ENCODE measurements at regions of chr10 and their contacts with region 1.

Region 1: DNA sequence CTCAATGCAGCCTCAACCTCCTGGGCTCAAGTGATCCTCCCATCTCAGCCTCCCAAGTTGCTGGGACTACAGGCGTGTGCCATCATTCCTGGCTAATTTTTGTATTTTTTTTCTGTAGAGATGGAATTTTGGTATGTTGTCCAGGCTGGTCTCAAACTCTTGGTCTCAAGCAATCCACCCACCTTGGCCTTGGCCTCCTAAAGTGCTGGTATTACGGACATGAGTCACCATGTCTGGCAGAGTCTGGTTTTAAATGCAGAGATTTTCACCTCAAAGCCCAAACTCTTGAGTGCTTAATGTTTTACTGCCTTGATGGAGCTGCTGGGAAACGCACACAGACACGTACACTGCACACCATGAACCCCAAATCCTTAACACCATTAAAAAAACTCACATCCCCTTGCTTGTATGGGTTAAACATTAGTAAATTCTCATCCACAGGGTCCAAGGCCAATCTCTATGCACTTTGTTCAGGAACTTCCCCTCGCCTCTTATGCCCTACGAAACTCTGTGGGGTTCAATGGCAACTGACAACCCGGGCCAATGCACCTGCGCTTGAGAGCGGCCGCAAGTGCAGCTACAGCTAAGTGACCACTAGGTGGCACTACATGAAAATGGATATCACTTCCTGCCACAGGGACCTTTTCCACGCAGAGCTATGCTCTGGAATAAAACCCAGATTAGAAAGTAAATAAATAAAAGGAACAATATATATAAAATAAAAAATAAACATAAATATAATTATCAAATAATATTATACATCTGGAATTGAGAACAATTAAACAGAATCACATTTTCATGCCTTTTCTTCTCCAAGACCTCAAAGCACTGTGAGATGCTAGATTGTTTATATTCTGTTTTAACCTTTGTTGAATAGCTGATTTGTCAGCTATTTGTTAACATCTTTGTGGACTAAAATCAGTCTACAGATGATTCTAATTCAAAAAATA is 66.9 kb upstream of the AFAP1L2 start:
- DNase-seq: peak; percentile 43 to 87 (median 67)
- ATAC-seq: peak; percentile 73
- H3K4me3 ChIP-seq: no peak overlapping the region
- H3K4me3 Mint-ChIP-seq: no peak overlapping the region
- H3K27ac ChIP-seq: no peak overlapping the region
- H3K27ac Mint-ChIP-seq: peak overlapping the region; percentile 89
- H3K4me1 ChIP-seq: peaks cover 11% of the 10 kb centered on the region
- H3K4me1 Mint-ChIP-seq: peaks cover 39% of the 10 kb centered on the region
- H3K27me3 ChIP-seq: no peaks in the 10 kb centered on the region
- H3K27me3 Mint-ChIP-seq: no peaks in the 10 kb centered on the region
- CTCF ChIP-seq: peak; percentile 83

Region 2: GRCh38 chr10:112875476-112876267 is 1595.6 kb before region 1 on chr10:
- CTCF ChIA-PET with region 1: no interaction called
- POLR2A ChIA-PET with region 1: no interaction called
- intact Hi-C with region 1: no loop called
- DNase-seq: peak in 1 of 9 experiments; percentile 12
- ATAC-seq: no peak
- H3K4me3 ChIP-seq: no peak overlapping the region
- H3K4me3 Mint-ChIP-seq: no peak overlapping the region
- H3K27ac ChIP-seq: no peak overlapping the region
- H3K27ac Mint-ChIP-seq: no peak overlapping the region
- H3K4me1 ChIP-seq: no peaks in the 10 kb centered on the region
- H3K4me1 Mint-ChIP-seq: no peaks in the 10 kb centered on the region
- H3K27me3 ChIP-seq: no peaks in the 10 kb centered on the region
- H3K27me3 Mint-ChIP-seq: peaks cover 1% of the 10 kb centered on the region
- CTCF ChIP-seq: no peak

Region 3: GRCh38 chr10:114304017-114304570 is 167.1 kb before region 1 on chr10:
- CTCF ChIA-PET with region 1: interaction called, 7 read pairs
- POLR2A ChIA-PET with region 1: no interaction called
- intact Hi-C with region 1: loop called in 1 of 2 experiments (anchors 2 kb)
- DNase-seq: peak; percentile 31 to 80 (median 67)
- ATAC-seq: peak; percentile 36
- H3K4me3 ChIP-seq: peak overlapping the region; percentile 59 to 69
- H3K4me3 Mint-ChIP-seq: peak overlapping the region; percentile 89
- H3K27ac ChIP-seq: peak overlapping the region; percentile 7 to 37
- H3K27ac Mint-ChIP-seq: peak overlapping the region; percentile 70
- H3K4me1 ChIP-seq: peaks cover 4% of the 10 kb centered on the region
- H3K4me1 Mint-ChIP-seq: peaks cover 10% of the 10 kb centered on the region
- H3K27me3 ChIP-seq: no peaks in the 10 kb centered on the region
- H3K27me3 Mint-ChIP-seq: no peaks in the 10 kb centered on the region
- CTCF ChIP-seq: peak; percentile 50

Region 4: DNA sequence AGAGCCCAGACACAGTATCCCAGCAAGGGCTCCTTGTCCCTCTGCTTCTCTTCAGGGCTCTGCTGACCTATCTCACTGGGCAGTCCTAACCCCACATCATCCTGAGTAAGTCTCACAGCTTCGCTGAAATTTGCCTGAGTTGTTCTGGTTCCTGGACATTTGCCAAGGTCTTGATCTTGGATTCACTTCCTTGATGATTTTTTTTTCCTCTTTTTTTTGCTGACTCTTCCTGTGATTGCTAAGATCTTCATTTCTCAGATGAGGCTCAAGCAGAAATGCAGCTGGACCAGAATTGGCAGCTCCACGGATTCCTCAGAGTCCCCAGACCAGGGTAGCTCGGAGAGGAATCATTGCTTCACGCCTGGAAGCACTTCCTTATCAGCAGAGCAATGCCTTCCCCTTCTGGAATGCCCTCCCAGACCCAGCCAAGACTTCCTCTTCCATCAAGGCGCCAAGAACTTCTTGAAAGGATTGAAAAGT is 58.3 kb before region 1 on chr10:
- CTCF ChIA-PET with region 1: no interaction called
- POLR2A ChIA-PET with region 1: no interaction called
- intact Hi-C with region 1: no loop called
- DNase-seq: no peak
- ATAC-seq: no peak
- H3K4me3 ChIP-seq: no peak overlapping the region
- H3K4me3 Mint-ChIP-seq: no peak overlapping the region
- H3K27ac ChIP-seq: no peak overlapping the region
- H3K27ac Mint-ChIP-seq: no peak overlapping the region
- H3K4me1 ChIP-seq: no peaks in the 10 kb centered on the region
- H3K4me1 Mint-ChIP-seq: no peaks in the 10 kb centered on the region
- H3K27me3 ChIP-seq: no peaks in the 10 kb centered on the region
- H3K27me3 Mint-ChIP-seq: peaks cover 13% of the 10 kb centered on the region
- CTCF ChIP-seq: no peak

Region 5: DNA sequence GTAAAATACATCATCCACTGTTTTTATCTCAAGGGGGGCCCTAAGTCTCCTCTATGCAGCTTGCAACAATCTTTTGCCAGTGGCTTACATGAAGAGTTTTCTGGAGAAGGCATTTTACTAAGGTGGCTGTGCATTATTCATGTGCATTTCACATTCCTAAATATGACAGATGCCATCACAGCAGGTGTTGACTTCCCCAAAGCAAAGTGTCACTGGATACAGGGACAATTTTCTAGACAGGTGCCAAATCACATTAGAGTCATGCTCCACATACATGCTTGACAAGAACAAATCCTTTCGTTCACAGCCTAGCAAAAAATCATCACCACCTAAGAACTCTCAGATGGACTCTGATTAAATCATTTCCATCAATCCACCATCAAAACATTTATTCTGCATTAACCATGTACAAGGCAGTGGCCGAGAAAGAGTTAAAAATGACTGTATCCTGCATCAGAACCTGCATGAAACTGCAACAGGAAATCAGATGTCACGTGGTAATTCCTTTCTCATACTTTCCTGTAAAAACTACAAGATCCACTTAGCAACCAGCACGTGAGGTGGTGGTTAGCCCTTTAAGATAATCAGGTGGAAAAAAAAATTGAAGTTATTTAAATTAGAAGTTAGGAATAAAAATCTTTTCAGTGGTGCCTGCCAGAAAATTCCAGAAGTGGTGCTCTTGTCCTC is 21.3 kb after region 1 on chr10:
- CTCF ChIA-PET with region 1: interaction called, 26 read pairs
- POLR2A ChIA-PET with region 1: interaction called, 3 read pairs
- intact Hi-C with region 1: no loop called
- DNase-seq: peak in 2 of 9 experiments; percentile 30 to 67
- ATAC-seq: peak; percentile 22
- H3K4me3 ChIP-seq: no peak overlapping the region
- H3K4me3 Mint-ChIP-seq: peak overlapping the region; percentile 67
- H3K27ac ChIP-seq: peak overlapping the region; percentile 20 to 24
- H3K27ac Mint-ChIP-seq: peak overlapping the region; percentile 83
- H3K4me1 ChIP-seq: peaks cover 68% of the 10 kb centered on the region
- H3K4me1 Mint-ChIP-seq: peaks cover 84% of the 10 kb centered on the region
- H3K27me3 ChIP-seq: no peaks in the 10 kb centered on the region
- H3K27me3 Mint-ChIP-seq: no peaks in the 10 kb centered on the region
- CTCF ChIP-seq: no peak

Region 6: GRCh38 chr10:114504769-114505579 is 33.7 kb after region 1 on chr10:
- CTCF ChIA-PET with region 1: interaction called, 17 read pairs
- POLR2A ChIA-PET with region 1: no interaction called
- intact Hi-C with region 1: no loop called
- DNase-seq: no peak
- ATAC-seq: no peak
- H3K4me3 ChIP-seq: no peak overlapping the region
- H3K4me3 Mint-ChIP-seq: no peak overlapping the region
- H3K27ac ChIP-seq: no peak overlapping the region
- H3K27ac Mint-ChIP-seq: peak overlapping the region; percentile 78
- H3K4me1 ChIP-seq: peaks cover 96% of the 10 kb centered on the region
- H3K4me1 Mint-ChIP-seq: peaks cover 92% of the 10 kb centered on the region
- H3K27me3 ChIP-seq: no peaks in the 10 kb centered on the region
- H3K27me3 Mint-ChIP-seq: no peaks in the 10 kb centered on the region
- CTCF ChIP-seq: no peak

Region 7: DNA sequence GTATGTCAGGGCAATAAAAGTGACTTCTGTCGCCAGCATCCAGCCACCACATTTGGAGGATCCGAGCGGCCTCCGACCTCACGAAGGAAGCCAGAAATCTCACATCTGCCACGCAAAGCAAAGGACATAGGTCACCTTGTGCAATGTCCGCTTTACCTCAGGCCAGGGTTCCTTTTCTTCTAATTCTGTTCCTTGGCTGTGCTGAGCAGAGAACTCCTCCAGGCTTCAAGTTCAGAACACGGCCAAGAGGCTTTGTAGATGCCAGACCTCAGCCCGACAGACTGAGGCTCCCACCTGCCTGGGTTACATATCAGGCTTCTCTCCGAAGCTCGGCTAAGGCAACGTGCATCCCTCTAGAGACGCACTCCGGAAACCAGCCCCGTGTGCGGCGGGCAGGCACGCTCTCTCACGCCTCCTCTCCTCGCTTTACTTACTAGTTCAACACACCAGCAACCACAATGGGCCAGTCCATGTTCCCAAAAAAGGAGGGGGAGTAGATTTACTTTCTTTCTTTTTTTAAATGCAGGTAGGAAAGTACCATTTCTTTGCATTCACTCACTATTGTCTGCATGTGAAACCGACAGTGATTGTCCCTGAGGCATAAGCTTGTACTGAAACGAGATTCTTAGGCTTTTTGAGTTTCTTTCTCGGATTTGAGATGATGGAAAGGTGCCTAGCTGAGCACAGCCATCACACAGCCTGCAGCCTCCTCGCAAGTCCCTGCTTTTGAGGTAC is 55.4 kb after region 1 on chr10:
- CTCF ChIA-PET with region 1: interaction called, 55 read pairs
- POLR2A ChIA-PET with region 1: interaction called, 7 read pairs
- intact Hi-C with region 1: loop called in 1 of 2 experiments (anchors 2 kb)
- DNase-seq: peak; percentile 80 to 98 (median 90)
- ATAC-seq: peak; percentile 86
- H3K4me3 ChIP-seq: peak overlapping the region; percentile 69 to 70
- H3K4me3 Mint-ChIP-seq: peak overlapping the region; percentile 92
- H3K27ac ChIP-seq: peak overlapping the region; percentile 89 to 93
- H3K27ac Mint-ChIP-seq: peak overlapping the region; percentile 97
- H3K4me1 ChIP-seq: peaks cover 47% of the 10 kb centered on the region
- H3K4me1 Mint-ChIP-seq: peaks cover 59% of the 10 kb centered on the region
- H3K27me3 ChIP-seq: no peaks in the 10 kb centered on the region
- H3K27me3 Mint-ChIP-seq: no peaks in the 10 kb centered on the region
- CTCF ChIP-seq: no peak

Region 8: DNA sequence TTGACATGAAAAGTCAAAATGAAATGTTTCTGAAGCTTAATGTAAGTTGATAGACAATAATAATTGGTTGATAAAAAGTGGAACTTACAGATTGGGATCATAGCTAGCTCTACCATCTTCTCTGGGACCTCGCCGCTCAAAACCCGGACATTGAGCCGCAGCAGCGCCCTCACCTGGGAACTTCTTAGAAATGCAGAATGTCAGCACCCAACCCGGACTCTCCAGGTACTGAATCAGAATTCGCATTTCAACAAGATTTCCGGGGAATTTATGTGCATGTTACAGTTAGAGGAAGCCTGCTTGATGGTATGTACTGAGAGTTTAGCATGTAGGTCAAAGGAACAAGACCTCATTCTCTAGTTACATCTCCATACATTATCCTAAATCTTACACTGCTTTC is 223.5 kb after region 1 on chr10:
- CTCF ChIA-PET with region 1: interaction called, 15 read pairs
- POLR2A ChIA-PET with region 1: no interaction called
- intact Hi-C with region 1: loop called (anchors 2 kb)
- DNase-seq: peak in 5 of 9 experiments; percentile 13 to 49 (median 34)
- ATAC-seq: peak; percentile 44
- H3K4me3 ChIP-seq: no peak overlapping the region
- H3K4me3 Mint-ChIP-seq: no peak overlapping the region
- H3K27ac ChIP-seq: no peak overlapping the region
- H3K27ac Mint-ChIP-seq: no peak overlapping the region
- H3K4me1 ChIP-seq: peaks cover 5% of the 10 kb centered on the region
- H3K4me1 Mint-ChIP-seq: peaks cover 13% of the 10 kb centered on the region
- H3K27me3 ChIP-seq: no peaks in the 10 kb centered on the region
- H3K27me3 Mint-ChIP-seq: peaks cover 11% of the 10 kb centered on the region
- CTCF ChIP-seq: peak; percentile 31

Region 9: DNA sequence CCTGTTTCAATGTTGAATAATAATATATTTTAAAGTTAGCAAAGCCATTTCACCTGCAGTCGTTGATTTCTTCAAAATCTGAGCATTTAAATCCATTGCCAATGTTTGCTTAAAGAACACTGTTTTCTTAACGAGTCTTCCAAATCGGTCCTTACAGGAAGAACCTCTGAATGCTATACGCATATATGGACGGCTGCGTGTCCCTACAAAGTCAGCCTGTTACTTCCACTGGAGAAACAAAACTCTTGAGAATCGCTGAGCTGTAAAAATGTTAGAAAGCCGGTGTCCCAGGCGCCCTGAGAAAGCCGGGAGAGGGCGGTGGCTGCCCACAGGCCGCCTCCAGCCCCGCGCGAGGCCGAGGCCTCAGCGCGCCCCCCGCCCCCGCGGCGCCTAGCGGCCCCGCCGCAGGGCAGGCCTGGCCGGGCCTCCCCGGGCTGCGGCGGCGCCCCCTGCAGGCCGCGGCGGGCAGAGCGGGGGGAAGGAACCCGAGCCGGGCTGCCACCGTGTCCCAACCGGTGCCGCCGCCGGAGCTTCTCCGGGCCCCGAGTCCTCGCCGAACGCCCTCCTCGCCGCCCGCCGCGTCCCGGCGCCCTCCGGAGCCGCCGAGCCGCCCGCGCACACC is 350.2 kb after region 1 on chr10 and contains the start of gene FHIP2A:
- CTCF ChIA-PET with region 1: interaction called, 5 read pairs
- POLR2A ChIA-PET with region 1: interaction called, 5 read pairs
- intact Hi-C with region 1: loop called in 1 of 2 experiments (anchors 1 kb)
- DNase-seq: peak; percentile 73 to 91 (median 82)
- ATAC-seq: peak; percentile 93
- H3K4me3 ChIP-seq: peak within 1 kb of the TSS; percentile 70 to 75
- H3K4me3 Mint-ChIP-seq: peak within 1 kb of the TSS; percentile 95
- H3K27ac ChIP-seq: peak within 1 kb of the TSS; percentile 78 to 79
- H3K27ac Mint-ChIP-seq: peak within 1 kb of the TSS; percentile 94
- H3K4me1 ChIP-seq: peaks cover 11% of the 10 kb centered on the region
- H3K4me1 Mint-ChIP-seq: peaks cover 38% of the 10 kb centered on the region
- H3K27me3 ChIP-seq: no peaks in the 10 kb centered on the region
- H3K27me3 Mint-ChIP-seq: peaks cover 2% of the 10 kb centered on the region
- CTCF ChIP-seq: peak; percentile 35
- total RNA-seq, gene FHIP2A: 62.0 to 66.4 TPM

Region 10: GRCh38 chr10:115355162-115355760 is 884.0 kb after region 1 on chr10:
- CTCF ChIA-PET with region 1: no interaction called
- POLR2A ChIA-PET with region 1: no interaction called
- intact Hi-C with region 1: no loop called
- DNase-seq: peak in 2 of 9 experiments; percentile 7 to 37
- ATAC-seq: no peak
- H3K4me3 ChIP-seq: no peak overlapping the region
- H3K4me3 Mint-ChIP-seq: no peak overlapping the region
- H3K27ac ChIP-seq: no peak overlapping the region
- H3K27ac Mint-ChIP-seq: no peak overlapping the region
- H3K4me1 ChIP-seq: no peaks in the 10 kb centered on the region
- H3K4me1 Mint-ChIP-seq: no peaks in the 10 kb centered on the region
- H3K27me3 ChIP-seq: no peaks in the 10 kb centered on the region
- H3K27me3 Mint-ChIP-seq: no peaks in the 10 kb centered on the region
- CTCF ChIP-seq: no peak

Measured in CD8-positive, alpha-beta T cell (primary cell).